ENCODE measurements at regions of chr17 and their contacts with region 1.

Region 1: GRCh38 chr17:22266231-22266630 is 573.9 kb downstream of the KCNJ18 start:
- H3K4me3 ChIP-seq: no peak overlapping the region
- H3K27ac ChIP-seq: no peak overlapping the region
- H3K4me1 ChIP-seq: no peaks in the 10 kb centered on the region
- CTCF ChIP-seq: no peak

Region 2: DNA sequence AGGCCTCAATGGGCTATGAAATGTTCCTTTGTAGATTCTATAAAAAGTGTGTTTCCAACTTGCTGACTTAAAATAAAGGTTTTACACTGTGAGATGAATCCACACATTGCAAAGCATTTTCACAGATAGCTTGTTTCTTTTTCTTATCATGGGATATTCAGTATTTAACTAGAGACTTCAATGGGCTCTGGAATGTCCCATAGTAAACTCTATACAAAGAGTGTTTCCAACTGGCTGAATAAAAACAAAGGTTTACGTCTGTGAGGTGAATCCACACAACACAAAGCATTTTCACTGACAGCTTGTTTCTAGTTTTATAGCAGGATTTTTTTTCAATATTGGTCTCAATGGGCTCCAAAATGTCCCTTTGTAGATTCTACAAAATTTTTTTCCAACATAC is 23.8 kb before region 1 on chr17:
- CTCF ChIA-PET with region 1: no interaction called
- POLR2A ChIA-PET with region 1: no interaction called
- H3K4me3 ChIP-seq: no peak overlapping the region
- H3K27ac ChIP-seq: no peak overlapping the region
- H3K4me1 ChIP-seq: no peaks in the 10 kb centered on the region
- CTCF ChIP-seq: no peak

Region 3: DNA sequence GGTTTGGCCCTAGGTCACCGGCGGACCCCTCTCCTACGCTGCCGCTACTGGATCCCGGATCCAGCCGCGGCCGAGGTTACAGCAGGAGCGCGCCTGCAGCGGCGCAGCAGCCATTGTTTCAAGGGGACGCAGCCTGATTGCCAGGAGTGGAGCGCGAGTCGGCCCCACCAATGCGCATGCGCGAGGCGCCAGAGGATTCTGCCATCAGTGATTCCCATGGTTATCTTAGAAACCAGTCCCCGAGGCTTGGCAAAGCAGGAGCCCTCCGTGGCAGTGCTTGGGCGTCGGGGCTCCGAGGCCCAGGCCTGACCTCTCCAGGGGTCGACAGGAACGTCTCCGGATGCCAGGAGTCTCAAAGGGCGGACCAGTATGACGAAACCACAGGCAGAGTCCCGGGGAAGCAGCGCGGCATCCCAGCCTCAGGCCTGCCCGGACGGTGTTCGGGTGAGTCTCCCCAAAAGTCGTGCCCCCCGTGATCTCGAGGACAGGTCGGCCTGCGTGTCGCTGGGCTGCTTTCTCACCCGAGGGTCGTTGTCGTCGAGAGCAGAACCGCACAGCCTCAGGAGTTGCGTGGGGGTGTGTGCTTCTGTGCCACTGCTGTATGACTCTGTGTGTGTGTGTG is 34.6 kb after region 1 on chr17:
- CTCF ChIA-PET with region 1: no interaction called
- POLR2A ChIA-PET with region 1: no interaction called
- H3K4me3 ChIP-seq: no peak overlapping the region
- H3K27ac ChIP-seq: no peak overlapping the region
- H3K4me1 ChIP-seq: no peaks in the 10 kb centered on the region
- CTCF ChIP-seq: no peak

Region 4: DNA sequence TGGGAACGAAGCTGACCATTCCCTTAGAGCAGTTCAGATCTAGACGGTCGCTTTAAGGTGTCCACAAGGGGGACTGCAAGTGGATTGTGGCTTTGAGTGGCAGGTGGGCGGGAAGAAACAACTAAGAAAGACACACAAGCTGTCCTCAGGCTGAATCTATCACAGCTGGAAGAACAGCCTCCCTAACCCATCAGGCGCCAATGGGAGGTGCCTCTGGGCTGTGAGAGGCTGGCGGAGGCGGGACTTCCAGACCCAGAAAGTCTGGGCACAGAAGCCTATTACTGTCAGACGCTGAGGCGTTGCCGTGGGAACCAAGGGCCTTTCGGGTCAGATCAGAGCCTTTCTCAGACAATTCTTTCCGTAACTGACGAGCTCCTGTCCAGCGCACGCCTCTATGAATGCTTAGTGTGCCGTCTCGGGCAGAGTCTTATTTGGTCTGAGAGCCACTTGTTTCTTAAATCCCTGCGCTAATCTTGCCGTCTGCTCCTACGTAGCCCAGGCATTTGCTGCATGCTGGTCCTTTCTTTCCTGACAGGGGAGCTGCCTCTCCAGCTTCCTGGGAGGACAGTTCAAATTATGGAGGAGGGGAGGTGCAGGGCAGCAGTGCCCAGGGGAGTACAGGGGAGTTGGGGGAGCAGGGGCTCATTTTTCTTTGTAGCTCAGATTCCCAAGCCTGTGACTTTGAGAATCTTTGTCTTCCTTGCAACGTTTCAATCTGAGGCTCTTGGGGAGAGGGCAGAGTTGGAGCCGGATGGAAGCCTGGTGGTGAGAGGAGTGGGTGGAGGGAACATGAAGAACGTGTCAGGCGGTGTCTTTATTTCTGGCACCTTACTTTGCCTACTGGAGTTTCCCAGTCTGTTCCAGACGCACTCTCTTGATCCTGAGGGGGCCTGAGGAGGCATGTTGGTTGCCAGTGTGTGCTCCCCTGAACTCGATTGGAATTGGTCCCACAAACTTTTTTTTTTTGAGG is 44.8 kb after region 1 on chr17:
- CTCF ChIA-PET with region 1: interaction called, 10 read pairs
- POLR2A ChIA-PET with region 1: no interaction called
- H3K4me3 ChIP-seq: peak overlapping the region; percentile 15
- H3K27ac ChIP-seq: peak overlapping the region; percentile 16; the same call in 1 of the 2 replicates
- H3K4me1 ChIP-seq: no peaks in the 10 kb centered on the region
- CTCF ChIP-seq: no peak

Measured in HEK293 (cell line).